Breast epithelium (tissue), 4 donors: ENCODE measurements at regions of chr6 and their contacts with region 1.

Region 1: DNA sequence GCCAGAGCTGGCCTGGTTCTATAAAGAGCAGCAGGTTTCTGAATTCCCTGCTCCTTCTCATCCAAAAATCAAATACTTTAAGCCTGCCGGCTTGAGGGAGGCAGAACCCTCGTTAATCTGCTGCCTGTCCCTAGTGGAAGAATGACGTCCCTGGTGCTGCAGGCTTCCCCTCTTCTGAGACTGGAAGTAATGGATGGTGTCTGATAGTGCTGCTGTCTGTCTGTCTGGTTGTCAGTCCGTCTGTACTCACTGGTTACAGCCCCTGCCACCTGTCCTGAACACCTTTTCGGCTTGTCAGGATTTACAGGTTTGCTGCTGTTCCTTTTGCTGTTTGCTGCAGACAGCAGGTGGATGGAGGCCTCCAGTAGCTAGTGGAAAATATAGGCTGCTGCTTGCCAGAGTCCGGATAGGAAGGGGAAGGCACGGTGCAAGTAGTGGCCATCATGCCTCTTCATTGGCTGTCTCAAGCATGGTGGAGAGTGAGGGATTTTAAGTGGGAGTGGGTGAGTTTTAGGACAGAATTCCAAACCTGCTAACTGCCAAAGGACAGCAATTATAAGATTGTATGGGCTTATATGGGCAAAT is 2.5 kb downstream of the RIMS1 start:
- DNase-seq: no peak
- H3K4me3 ChIP-seq: no peak overlapping the region
- H3K27ac ChIP-seq: no peak overlapping the region
- H3K4me1 ChIP-seq: no peaks in the 10 kb centered on the region
- H3K27me3 ChIP-seq: peaks cover 0 to 31% of the 10 kb centered on the region in 2 donors
- CTCF ChIP-seq: no peak
- POLR2A ChIP-seq: no peak

Region 2: DNA sequence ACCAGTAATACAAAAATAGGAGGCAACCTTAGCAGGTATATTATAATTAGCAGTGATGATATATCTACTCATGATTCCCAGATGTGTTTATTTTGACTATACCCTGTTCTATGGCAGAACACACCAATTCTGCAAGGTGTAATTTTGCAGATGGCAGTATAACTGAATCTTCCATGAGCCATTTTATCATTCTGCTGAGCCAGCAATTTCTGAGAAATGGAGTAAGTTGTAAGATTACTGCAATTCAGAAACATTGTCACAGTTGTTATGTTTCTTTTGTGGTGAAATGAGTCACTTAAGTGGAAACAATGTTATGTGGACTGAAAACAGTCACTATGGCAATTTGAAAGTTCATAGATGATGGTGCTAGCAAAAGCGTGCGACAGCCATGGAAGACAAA is 66.2 kb before region 1 on chr6:
- intact Hi-C with region 1: loop called (anchors 2 kb)
- DNase-seq: no peak
- H3K4me3 ChIP-seq: no peak overlapping the region
- H3K27ac ChIP-seq: no peak overlapping the region
- H3K4me1 ChIP-seq: no peaks in the 10 kb centered on the region
- H3K27me3 ChIP-seq: no peaks in the 10 kb centered on the region
- CTCF ChIP-seq: no peak
- POLR2A ChIP-seq: no peak

Region 3: GRCh38 chr6:71994705-71995271 is 105.9 kb after region 1 on chr6:
- intact Hi-C with region 1: no loop called
- DNase-seq: no peak
- H3K4me3 ChIP-seq: no peak overlapping the region
- H3K27ac ChIP-seq: no peak overlapping the region
- H3K4me1 ChIP-seq: no peaks in the 10 kb centered on the region
- H3K27me3 ChIP-seq: no peaks in the 10 kb centered on the region
- CTCF ChIP-seq: no peak
- POLR2A ChIP-seq: no peak

Region 4: GRCh38 chr6:72522719-72523141 is 633.9 kb after region 1 on chr6:
- intact Hi-C with region 1: no loop called
- DNase-seq: no peak
- H3K4me3 ChIP-seq: no peak overlapping the region
- H3K27ac ChIP-seq: no peak overlapping the region
- H3K4me1 ChIP-seq: no peaks in the 10 kb centered on the region
- H3K27me3 ChIP-seq: no peaks in the 10 kb centered on the region
- CTCF ChIP-seq: no peak
- POLR2A ChIP-seq: no peak